Mucosa of descending colon (tissue), 3 donors: ENCODE measurements at regions of chr20 and their contacts with region 1.

Region 1: DNA sequence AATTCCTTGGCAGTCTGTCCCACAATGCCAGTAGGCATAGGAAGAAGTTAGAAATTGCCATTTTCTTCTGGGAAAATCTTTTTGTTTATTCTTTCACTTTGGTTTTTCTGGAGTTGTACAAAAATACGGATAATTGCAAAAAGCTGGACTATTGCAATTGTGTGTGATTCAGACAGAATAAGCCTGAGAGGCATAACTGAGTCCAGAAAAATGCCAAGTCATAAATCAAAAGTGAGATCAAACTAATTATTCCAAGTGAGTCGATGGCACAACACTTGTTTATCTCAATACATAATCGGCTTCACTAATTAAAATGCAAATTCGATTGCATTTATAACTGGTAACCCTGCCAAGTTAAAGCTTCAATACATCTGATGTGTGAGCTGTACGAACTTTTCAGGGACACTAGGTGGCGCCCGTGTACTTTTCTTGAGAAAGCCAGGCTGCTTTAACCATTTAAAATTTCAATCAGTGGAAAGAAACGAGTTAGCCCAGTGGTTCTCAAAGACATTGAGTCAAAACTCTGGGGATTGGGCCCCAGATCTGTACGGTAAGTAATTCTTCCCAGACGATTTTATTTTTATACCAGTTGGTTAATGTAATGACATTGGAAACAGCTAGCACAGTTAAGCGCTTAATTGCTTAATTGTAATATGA is 102.6 kb downstream of the LAMP5 start:
- DNase-seq: peak in 2 of 3 donors; percentile 35 to 65
- ATAC-seq: peak; percentile 79
- H3K4me3 ChIP-seq: no peak overlapping the region
- H3K4me1 ChIP-seq: no peaks in the 10 kb centered on the region
- CTCF ChIP-seq: peak; percentile 63

Region 2: GRCh38 chr20:9660236-9660868 is 43.4 kb after region 1 on chr20:
- intact Hi-C with region 1: no loop called
- DNase-seq: peak in 1 of 3 donors; percentile 21
- ATAC-seq: no peak
- H3K4me3 ChIP-seq: no peak overlapping the region
- H3K4me1 ChIP-seq: no peaks in the 10 kb centered on the region
- CTCF ChIP-seq: no peak

Region 3: GRCh38 chr20:9838378-9839295 is 221.7 kb after region 1 on chr20 and contains the start of gene PAK5:
- intact Hi-C with region 1: no loop called
- DNase-seq: peak in 2 of 3 donors; percentile 18 to 55
- ATAC-seq: peak; percentile 51
- H3K4me3 ChIP-seq: no peak within 1 kb of the TSS
- H3K4me1 ChIP-seq: no peaks in the 10 kb centered on the region
- CTCF ChIP-seq: no peak
- total RNA-seq, gene PAK5: 0.06 to 0.13 TPM in 2 of 3 donors, not detected in the other

Region 4: DNA sequence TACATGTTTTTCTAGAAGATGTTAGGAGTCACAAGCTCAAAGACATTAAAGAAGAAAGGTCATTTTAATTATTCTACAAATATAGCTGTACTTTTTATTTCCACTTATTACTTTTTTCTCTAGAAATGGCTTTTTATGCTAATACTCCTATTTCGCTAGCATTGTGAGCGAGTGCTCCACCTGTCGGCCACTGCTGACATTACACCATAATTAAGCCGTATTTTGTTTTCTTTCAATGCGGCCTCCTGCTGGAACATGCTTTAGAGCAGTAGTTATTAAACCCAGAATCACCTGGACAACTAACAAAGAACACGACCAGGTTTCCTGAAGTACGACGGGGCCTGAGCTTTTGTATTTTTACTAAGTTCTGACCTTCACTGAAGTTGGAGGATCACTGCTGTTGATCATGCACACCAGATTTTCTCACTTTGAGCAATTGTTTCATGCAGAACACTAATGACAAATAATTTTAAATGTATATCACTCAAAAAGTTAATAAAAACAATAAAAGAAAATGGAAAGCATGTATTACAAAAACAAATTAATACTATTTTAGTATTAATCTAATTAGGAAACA is 296.0 kb after region 1 on chr20:
- intact Hi-C with region 1: loop called (anchors 5 kb)
- DNase-seq: peak in 2 of 3 donors; percentile 27 to 61
- ATAC-seq: peak; percentile 56
- H3K4me3 ChIP-seq: no peak overlapping the region
- H3K4me1 ChIP-seq: no peaks in the 10 kb centered on the region
- CTCF ChIP-seq: peak; percentile 53

Region 5: DNA sequence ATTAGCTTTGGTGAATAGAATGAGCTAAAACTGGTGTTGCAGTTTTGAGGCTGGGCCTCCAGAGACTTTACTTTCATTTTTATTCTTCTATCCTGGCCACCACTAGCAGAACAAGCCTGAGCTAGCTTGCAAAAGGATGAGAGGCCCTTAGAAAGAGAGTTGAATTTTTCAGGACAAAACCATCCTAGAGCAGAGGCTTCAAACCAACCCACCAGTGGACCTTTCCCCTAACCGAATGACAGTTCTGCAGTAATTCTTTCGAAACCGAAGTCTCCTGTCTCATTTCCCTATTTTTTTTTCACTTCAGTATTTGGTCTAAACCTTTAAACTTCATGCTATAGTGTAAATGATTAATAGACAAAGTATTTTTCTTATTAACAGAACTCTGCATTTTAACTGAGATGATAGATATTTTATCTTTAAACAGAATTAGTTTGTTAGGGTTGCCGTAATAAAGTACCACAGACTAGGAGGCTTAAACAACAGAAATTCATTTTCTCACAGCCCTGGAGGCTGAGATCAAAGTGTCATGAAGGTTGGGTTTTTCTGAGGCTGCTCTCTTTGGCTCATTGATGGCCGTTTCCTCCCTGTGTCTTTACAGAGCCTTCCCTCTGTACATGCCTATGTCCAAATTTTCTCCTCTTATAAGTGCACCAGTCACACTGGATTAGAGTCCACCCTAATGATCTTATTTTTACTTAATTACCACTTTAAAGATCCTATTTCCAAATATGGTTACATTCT is 302.5 kb after region 1 on chr20:
- intact Hi-C with region 1: loop called (anchors 5 kb)
- DNase-seq: no peak
- ATAC-seq: no peak
- H3K4me3 ChIP-seq: no peak overlapping the region
- H3K4me1 ChIP-seq: no peaks in the 10 kb centered on the region
- CTCF ChIP-seq: no peak